Activated naive CD8-positive, alpha-beta T cell treated with anti-CD3 and anti-CD28 coated beads, Interleukin-2, amount 10 ng/mL, durations not matched to agents 7 days and 5 days (primary cell): ENCODE measurements at regions of chr13 and their contacts with region 1.

Region 1: GRCh38 chr13:19863323-19864023 is at the start of gene ZMYM5:
- DNase-seq: peak; percentile 96
- ATAC-seq: peak; percentile 89
- H3K4me3 Mint-ChIP-seq: peak within 1 kb of the TSS; percentile 99
- H3K27ac Mint-ChIP-seq: peak within 1 kb of the TSS; percentile 99
- H3K4me1 Mint-ChIP-seq: peaks cover 26% of the 10 kb centered on the region
- H3K27me3 Mint-ChIP-seq: no peaks in the 10 kb centered on the region
- total RNA-seq, gene ZMYM5: 20.8 to 22.2 TPM

Region 2: GRCh38 chr13:19633479-19634255 is 229.8 kb before region 1 on chr13 and contains the start of gene MPHOSPH8:
- POLR2A ChIA-PET with region 1: interaction called, 10 read pairs
- DNase-seq: peak; percentile 89
- ATAC-seq: peak; percentile 98
- H3K4me3 Mint-ChIP-seq: peak within 1 kb of the TSS; percentile 100
- H3K27ac Mint-ChIP-seq: peak within 1 kb of the TSS; percentile 100
- H3K4me1 Mint-ChIP-seq: peaks cover 25% of the 10 kb centered on the region
- H3K27me3 Mint-ChIP-seq: no peaks in the 10 kb centered on the region
- total RNA-seq, gene MPHOSPH8: 62.6 to 65.9 TPM

Region 3: GRCh38 chr13:19782049-19782726 is 81.3 kb before region 1 on chr13:
- POLR2A ChIA-PET with region 1: interaction called, 50 read pairs
- DNase-seq: peak; percentile 70
- ATAC-seq: peak; percentile 43
- H3K4me3 Mint-ChIP-seq: peak overlapping the region; percentile 95
- H3K27ac Mint-ChIP-seq: peak overlapping the region; percentile 98
- H3K4me1 Mint-ChIP-seq: peaks cover 6% of the 10 kb centered on the region
- H3K27me3 Mint-ChIP-seq: no peaks in the 10 kb centered on the region

Region 4: GRCh38 chr13:19958155-19959111 is 95.0 kb after region 1 on chr13 and contains the start of gene ZMYM2:
- POLR2A ChIA-PET with region 1: interaction called, 25 read pairs
- DNase-seq: peak; percentile 99
- ATAC-seq: peak; percentile 82
- H3K4me3 Mint-ChIP-seq: peak within 1 kb of the TSS; percentile 99
- H3K27ac Mint-ChIP-seq: peak within 1 kb of the TSS; percentile 99
- H3K4me1 Mint-ChIP-seq: peaks cover 21% of the 10 kb centered on the region
- H3K27me3 Mint-ChIP-seq: peaks cover 3% of the 10 kb centered on the region
- total RNA-seq, gene ZMYM2: 82.8 to 92.0 TPM